Left colon (tissue), 2 donors: ENCODE measurements at regions of chr9 and their contacts with region 1.

Region 1: DNA sequence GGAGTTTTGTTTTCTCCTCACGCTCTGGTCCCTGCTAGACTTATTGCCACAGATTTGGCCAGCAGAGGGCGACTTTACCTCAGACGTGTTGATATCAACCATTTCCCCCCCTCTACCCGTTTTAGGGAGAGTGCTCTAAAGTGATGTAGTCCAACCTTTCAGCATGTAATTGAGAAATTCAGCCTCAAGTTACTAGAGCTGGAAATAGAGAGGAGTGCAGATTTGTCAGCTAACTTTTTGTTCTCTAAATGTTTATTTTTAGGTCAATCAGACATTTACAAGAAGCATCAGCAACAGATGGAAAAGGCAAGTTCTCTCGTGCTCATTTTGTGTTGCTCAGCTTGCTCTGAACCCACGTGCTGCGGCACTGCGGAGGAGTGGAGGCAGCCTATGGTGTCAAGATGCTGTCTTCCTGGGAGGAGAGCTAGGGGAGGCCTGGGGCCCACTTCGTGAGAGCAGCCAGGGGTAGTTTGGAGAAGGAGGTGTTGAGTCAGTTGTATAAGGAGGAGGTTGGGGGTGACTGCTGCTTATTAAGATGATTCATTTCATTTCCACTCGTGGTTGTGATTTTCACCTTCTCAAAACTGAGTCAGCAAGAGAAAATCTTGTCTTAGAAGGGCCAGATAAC is 53.6 kb downstream of the GPR107 start:
- DNase-seq: peak; percentile 74 to 95
- ATAC-seq: peak; percentile 77

Region 2: GRCh38 chr9:130235897-130236668 is 128.7 kb after region 1 on chr9:
- intact Hi-C with region 1: loop called (anchors 5 kb)
- DNase-seq: peak in 1 of 2 donors; percentile 71
- ATAC-seq: peak; percentile 49

Region 3: DNA sequence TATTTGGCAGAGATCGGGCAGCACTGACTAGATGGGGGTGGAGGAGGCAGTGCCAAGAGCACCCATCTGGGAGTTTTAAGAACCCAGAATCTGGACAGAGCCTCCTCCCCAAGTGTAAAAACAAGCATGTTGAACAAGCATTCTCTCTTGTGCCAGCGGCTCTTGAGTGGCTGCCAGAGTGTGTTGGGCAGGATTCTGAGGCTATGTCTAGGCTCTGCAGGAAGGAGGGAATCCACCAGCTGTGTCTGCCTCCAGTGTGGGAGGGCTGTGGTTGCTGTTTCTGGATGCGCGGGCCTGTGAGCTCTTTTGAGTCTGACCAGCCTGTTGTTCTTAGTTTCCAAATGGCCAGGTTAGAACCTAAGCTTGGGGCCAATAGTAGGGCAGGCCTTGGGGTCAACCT is 198.0 kb after region 1 on chr9:
- intact Hi-C with region 1: no loop called
- DNase-seq: peak in 1 of 2 donors; percentile 53
- ATAC-seq: no peak

Region 4: GRCh38 chr9:130343445-130343918 is 236.1 kb after region 1 on chr9:
- intact Hi-C with region 1: loop called in 1 of 2 experiments (anchors 5 kb)
- DNase-seq: peak in 1 of 2 donors; percentile 34
- ATAC-seq: peak; percentile 31